PC-9 (cell line): ENCODE measurements at regions of chr12 and their contacts with region 1.

Region 1: GRCh38 chr12:5965950-5966383 is 20.9 kb upstream of the ANO2 start:
- DNase-seq: peak in 1 of 2 experiments; percentile 63
- H3K4me3 ChIP-seq: no peak overlapping the region
- H3K27ac ChIP-seq: no peak overlapping the region
- H3K4me1 ChIP-seq: no peaks in the 10 kb centered on the region
- H3K27me3 ChIP-seq: peaks cover 66% of the 10 kb centered on the region
- CTCF ChIP-seq: peak; percentile 79

Region 2: GRCh38 chr12:6039894-6040568 is 74.1 kb after region 1 on chr12:
- CTCF ChIA-PET with region 1: no interaction called
- POLR2A ChIA-PET with region 1: no interaction called
- intact Hi-C with region 1: loop called (anchors 5 kb)
- DNase-seq: peak; percentile 44 to 65
- H3K4me3 ChIP-seq: no peak overlapping the region
- H3K27ac ChIP-seq: no peak overlapping the region
- H3K4me1 ChIP-seq: peaks cover 11% of the 10 kb centered on the region
- H3K27me3 ChIP-seq: no peaks in the 10 kb centered on the region
- CTCF ChIP-seq: peak; percentile 98

Region 3: GRCh38 chr12:6161124-6161882 is 195.3 kb after region 1 on chr12:
- CTCF ChIA-PET with region 1: no interaction called
- POLR2A ChIA-PET with region 1: no interaction called
- intact Hi-C with region 1: no loop called
- DNase-seq: no peak
- H3K4me3 ChIP-seq: no peak overlapping the region
- H3K27ac ChIP-seq: no peak overlapping the region
- H3K4me1 ChIP-seq: peaks cover 6% of the 10 kb centered on the region
- H3K27me3 ChIP-seq: no peaks in the 10 kb centered on the region
- CTCF ChIP-seq: no peak

Region 4: DNA sequence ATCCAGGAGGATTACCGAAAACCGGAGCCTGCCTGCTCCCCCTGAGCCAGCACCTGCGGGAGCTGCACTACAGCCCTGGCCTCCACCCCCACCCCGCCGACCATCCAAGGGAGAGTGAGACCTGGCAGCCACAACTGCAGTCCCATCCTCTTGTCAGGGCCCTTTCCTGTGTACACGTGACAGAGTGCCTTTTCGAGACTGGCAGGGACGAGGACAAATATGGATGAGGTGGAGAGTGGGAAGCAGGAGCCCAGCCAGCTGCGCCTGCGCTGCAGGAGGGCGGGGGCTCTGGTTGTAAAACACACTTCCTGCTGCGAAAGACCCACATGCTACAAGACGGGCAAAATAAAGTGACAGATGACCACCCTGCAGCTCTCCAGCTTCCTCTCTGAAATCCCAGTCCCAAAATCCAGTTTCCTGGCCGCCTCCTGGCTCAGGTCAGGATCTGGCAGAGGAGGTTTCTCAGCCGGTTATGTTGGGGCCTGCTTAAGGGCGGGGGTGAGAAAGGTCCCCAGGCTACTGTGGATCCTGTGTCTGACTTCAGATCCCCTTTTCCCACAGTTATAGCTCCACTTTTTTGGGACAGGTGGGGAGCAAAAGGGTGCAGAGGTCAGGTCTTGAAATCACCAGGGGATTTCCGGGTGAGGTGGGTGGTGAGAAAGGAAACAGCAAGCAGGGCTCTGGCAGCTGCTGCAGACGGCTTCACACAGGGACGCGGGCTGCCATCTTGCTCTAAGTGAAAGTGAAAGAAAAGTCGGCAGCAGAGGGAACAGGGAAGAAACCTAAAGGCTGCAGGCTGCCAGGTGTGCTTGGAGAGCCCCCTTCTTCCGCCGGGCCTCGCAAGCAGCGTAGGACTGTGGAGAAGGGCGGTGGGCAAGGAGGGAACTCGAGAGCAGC is 485.6 kb after region 1 on chr12 and contains the start of gene TAPBPL:
- CTCF ChIA-PET with region 1: no interaction called
- POLR2A ChIA-PET with region 1: no interaction called
- intact Hi-C with region 1: no loop called
- DNase-seq: peak; percentile 70 to 85
- H3K4me3 ChIP-seq: peak within 1 kb of the TSS; percentile 63
- H3K27ac ChIP-seq: peak within 1 kb of the TSS; percentile 52
- H3K4me1 ChIP-seq: peaks cover 13% of the 10 kb centered on the region
- H3K27me3 ChIP-seq: no peaks in the 10 kb centered on the region
- CTCF ChIP-seq: no peak
- total RNA-seq, gene TAPBPL: 26.0 and 27.8 TPM in 2 replicates